Calu3 (cell line): ENCODE measurements at regions of chr1 and their contacts with region 1.

Region 1: GRCh38 chr1:236603991-236604904 is at the start of gene HEATR1:
- DNase-seq: peak; percentile 96
- H3K4me3 Mint-ChIP-seq: peak within 1 kb of the TSS; percentile 89
- H3K27ac Mint-ChIP-seq: peak within 1 kb of the TSS; percentile 91
- H3K4me1 Mint-ChIP-seq: peaks cover 9% of the 10 kb centered on the region
- H3K27me3 Mint-ChIP-seq: no peaks in the 10 kb centered on the region
- CTCF ChIP-seq: no peak
- total RNA-seq, gene HEATR1: 70.4 and 75.5 TPM in 2 replicates

Region 2: DNA sequence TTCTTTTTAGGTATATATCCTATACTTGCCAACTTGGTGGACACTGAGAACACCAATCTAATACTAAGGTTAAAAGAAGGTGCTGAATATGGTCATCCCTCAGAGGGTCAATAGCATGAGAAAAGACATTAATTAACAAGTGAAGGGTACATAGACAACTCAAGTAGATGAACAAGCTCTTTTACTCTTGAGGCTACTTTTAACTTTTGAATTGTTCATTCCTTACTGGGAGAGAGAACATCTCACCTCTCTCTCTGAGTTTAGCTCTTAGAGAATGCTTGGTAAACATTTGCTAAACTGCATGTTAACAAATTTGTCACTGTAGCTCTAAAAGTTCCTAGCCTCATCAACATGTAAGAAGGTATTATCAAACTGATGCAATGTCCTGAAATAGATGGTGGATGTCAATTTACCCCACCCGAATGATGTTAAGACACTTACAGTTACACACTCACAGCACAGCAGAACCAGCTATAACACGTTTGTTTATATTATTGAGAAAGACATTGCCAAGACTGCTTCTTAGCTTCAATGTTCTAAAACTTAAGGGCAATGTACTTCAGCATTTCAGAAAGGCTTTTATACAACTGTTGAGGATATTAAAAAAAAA is 35.9 kb before region 1 on chr1:
- CTCF ChIA-PET with region 1: no interaction called
- intact Hi-C with region 1: no loop called
- DNase-seq: no peak
- H3K4me3 Mint-ChIP-seq: no peak overlapping the region
- H3K27ac Mint-ChIP-seq: peak overlapping the region; percentile 3
- H3K4me1 Mint-ChIP-seq: no peaks in the 10 kb centered on the region
- H3K27me3 Mint-ChIP-seq: no peaks in the 10 kb centered on the region
- CTCF ChIP-seq: no peak

Region 3: DNA sequence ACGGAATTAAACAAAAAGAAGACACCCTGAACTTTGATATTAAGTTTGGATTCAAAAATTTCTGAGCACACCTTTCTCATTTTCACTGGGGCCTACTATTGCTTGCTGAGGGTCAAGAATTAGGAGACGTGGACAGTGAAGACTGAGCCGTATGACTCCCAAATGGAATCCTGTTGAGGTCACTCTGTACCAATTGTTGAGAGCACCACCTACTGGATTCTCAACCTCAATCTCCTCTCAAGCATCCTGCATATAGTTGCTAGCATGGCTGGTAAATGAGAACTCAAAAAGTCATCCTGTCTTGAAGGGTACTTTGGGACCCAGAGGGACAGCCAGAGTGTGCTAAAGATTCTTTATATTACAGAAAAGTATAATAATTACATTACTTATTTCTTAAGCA is 170.7 kb after region 1 on chr1:
- CTCF ChIA-PET with region 1: no interaction called
- intact Hi-C with region 1: loop called (anchors 1 kb)
- DNase-seq: no peak
- H3K4me3 Mint-ChIP-seq: no peak overlapping the region
- H3K27ac Mint-ChIP-seq: no peak overlapping the region
- H3K4me1 Mint-ChIP-seq: no peaks in the 10 kb centered on the region
- H3K27me3 Mint-ChIP-seq: no peaks in the 10 kb centered on the region
- CTCF ChIP-seq: no peak

Region 4: DNA sequence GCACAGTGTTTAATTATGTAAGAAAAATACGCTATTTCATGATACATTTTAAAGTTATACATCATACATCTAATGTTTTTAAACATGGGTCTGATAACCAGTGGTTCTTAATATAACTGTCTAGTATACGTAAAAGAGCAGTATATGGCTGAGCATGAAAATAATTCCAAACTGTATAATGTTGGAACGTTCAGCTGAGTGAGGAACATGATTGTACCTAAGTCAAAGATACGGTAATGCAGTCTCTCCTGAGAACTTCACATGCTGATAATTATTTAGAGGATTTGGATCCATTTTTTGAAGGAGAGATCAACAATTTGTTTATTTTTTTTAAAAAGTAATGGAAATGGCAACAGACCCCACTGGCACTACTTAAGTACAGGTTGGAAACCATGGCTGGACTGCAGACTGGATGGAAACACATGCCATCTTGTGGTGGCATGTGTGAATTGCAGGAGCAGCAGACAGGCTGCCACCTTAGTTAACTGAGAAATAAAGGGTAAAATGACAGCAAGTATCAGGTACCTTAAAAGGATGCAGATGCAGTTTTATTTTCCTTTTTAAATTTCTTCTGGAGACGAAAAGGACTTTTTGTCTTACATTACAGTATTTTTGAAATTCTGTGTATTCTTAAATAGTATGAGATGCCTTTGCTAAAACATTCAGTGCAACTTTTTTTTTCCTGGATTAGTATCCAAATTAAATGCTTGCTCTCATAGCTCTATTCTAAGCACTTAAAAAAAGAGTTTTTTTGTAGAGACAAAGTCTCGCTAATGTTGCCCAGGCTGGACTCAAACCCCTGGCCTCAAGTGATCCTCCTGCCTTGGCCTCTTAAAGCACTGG is 264.6 kb after region 1 on chr1:
- CTCF ChIA-PET with region 1: no interaction called
- intact Hi-C with region 1: loop called (anchors 1 kb)
- DNase-seq: peak; percentile 52
- H3K4me3 Mint-ChIP-seq: no peak overlapping the region
- H3K27ac Mint-ChIP-seq: no peak overlapping the region
- H3K4me1 Mint-ChIP-seq: no peaks in the 10 kb centered on the region
- H3K27me3 Mint-ChIP-seq: no peaks in the 10 kb centered on the region
- CTCF ChIP-seq: peak; percentile 94

Region 5: GRCh38 chr1:237386362-237387143 is 782.3 kb after region 1 on chr1:
- CTCF ChIA-PET with region 1: interaction called, 6 read pairs
- intact Hi-C with region 1: loop called (anchors 1 kb)
- DNase-seq: no peak
- H3K4me3 Mint-ChIP-seq: no peak overlapping the region
- H3K27ac Mint-ChIP-seq: no peak overlapping the region
- H3K4me1 Mint-ChIP-seq: no peaks in the 10 kb centered on the region
- H3K27me3 Mint-ChIP-seq: no peaks in the 10 kb centered on the region
- CTCF ChIP-seq: peak; percentile 62

Region 6: DNA sequence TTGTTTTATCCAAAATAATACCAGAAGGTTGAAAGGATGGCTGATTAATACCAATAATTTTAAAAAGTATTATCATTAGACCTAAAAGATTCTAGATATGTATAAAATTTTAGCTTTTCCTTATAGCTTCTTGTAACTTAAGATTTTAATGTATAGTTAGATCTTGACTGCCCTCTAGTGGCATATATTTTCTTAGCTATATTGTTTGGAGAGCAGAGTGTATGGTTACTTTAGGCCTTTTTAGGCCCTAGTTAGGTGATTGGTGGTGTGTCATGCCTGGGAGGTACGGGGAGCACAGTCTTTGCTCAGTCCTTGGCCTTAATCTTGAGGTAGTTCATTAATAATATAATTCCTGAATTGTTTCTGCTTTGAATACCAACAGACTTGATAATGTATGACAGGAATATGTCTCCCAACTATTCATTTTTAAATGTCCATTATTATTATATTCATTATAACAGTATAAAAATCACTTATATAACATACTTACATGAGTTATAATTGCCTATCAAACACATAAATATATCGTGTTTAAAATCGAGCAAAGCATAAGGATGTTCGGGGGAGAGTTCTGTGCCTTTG is 958.1 kb after region 1 on chr1:
- CTCF ChIA-PET with region 1: no interaction called
- intact Hi-C with region 1: loop called (anchors 2 kb)
- DNase-seq: peak; percentile 18
- H3K4me3 Mint-ChIP-seq: no peak overlapping the region
- H3K27ac Mint-ChIP-seq: no peak overlapping the region
- H3K4me1 Mint-ChIP-seq: no peaks in the 10 kb centered on the region
- H3K27me3 Mint-ChIP-seq: no peaks in the 10 kb centered on the region
- CTCF ChIP-seq: peak; percentile 76